Activated CD4-positive, alpha-beta memory T cell treated with anti-CD3 and anti-CD28 coated beads for 36 hours (primary cell): ENCODE measurements at regions of chr11 and their contacts with region 1.

Region 1: DNA sequence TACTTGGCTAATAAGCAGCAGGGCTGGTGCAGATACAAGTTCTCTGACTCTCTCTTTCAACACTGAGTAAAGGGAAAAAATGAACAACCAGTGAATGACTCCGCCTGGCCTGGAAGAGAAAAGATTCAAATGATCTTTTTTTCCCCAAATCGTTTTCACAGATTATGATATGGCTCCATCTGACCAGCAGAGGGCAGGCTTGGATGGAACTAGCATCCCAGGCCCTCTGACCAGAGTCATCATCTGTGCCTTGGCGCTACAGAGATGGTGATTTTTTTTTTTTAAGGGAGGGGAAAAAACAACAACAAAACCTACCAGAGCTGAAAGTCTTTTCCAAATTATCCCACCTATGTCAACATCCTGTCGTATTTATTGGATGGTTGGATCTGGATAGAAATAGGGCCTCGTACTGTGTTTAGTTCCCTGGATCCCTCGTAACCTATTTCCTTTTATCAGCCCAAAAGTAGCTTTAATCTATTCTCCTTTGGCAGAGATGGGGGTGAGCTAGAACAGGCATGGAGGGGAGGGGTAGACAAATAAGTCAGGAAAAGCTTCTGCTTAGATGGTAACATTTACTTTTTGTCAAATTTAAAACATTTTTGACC is 69.7 kb downstream of the PRSS23 start:
- DNase-seq: peak; percentile 58
- H3K4me3 Mint-ChIP-seq: no peak overlapping the region
- H3K27ac Mint-ChIP-seq: no peak overlapping the region
- H3K4me1 Mint-ChIP-seq: no peaks in the 10 kb centered on the region
- H3K27me3 Mint-ChIP-seq: no peaks in the 10 kb centered on the region

Region 2: GRCh38 chr11:86919557-86920210 is 49.6 kb after region 1 on chr11:
- CTCF ChIA-PET with region 1: interaction called, 11 read pairs
- POLR2A ChIA-PET with region 1: no interaction called
- intact Hi-C with region 1: loop called (anchors 1 kb)
- DNase-seq: no peak
- H3K4me3 Mint-ChIP-seq: no peak overlapping the region
- H3K27ac Mint-ChIP-seq: no peak overlapping the region
- H3K4me1 Mint-ChIP-seq: no peaks in the 10 kb centered on the region
- H3K27me3 Mint-ChIP-seq: peaks cover 1% of the 10 kb centered on the region